ENCODE measurements at regions of chr4 and their contacts with region 1.

Region 1: DNA sequence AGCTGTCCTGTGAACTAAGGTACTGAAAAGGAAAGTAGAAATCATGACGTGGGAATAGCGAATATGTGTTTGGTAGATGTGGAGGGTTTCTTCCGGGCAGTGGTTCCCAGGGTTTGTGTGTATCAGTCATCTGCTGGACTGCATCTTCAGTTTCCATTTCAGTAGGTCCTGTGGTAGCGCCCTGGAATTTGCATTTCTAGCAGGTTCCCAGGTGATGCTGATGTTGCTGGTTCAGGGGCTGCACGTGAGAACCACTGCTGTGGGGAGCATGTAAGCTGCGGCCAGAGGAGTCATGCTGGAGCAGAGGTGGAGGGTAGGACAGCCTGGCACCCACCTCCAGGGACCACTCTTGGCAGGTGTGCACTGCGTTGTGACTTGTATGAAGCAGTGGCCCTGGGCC is 47.1 kb downstream of the ARHGAP10 start:
- DNase-seq: no peak

Region 2: GRCh38 chr4:147822128-147822527 is 43.2 kb after region 1 on chr4:
- intact Hi-C with region 1: loop called (anchors 5 kb)
- DNase-seq: peak; percentile 85